B cell (primary cell): ENCODE measurements at regions of chr12 and their contacts with region 1.

Region 1: GRCh38 chr12:47812797-47813510 is 6.7 kb downstream of the HDAC7 start:
- DNase-seq: peak; percentile 94
- ATAC-seq: peak; percentile 72
- H3K4me3 ChIP-seq: peak overlapping the region; percentile 53 to 68 (median 61)
- H3K4me3 Mint-ChIP-seq: peak overlapping the region; percentile 85
- H3K27ac ChIP-seq: peak overlapping the region; percentile 96 to 98
- H3K27ac Mint-ChIP-seq: peak overlapping the region; percentile 96
- H3K4me1 ChIP-seq: peaks cover 91 to 97% of the 10 kb centered on the region in 2 donors
- H3K4me1 Mint-ChIP-seq: peaks cover 94% of the 10 kb centered on the region
- H3K27me3 ChIP-seq: no peaks in the 10 kb centered on the region
- H3K27me3 Mint-ChIP-seq: no peaks in the 10 kb centered on the region
- CTCF ChIP-seq: no peak

Region 2: DNA sequence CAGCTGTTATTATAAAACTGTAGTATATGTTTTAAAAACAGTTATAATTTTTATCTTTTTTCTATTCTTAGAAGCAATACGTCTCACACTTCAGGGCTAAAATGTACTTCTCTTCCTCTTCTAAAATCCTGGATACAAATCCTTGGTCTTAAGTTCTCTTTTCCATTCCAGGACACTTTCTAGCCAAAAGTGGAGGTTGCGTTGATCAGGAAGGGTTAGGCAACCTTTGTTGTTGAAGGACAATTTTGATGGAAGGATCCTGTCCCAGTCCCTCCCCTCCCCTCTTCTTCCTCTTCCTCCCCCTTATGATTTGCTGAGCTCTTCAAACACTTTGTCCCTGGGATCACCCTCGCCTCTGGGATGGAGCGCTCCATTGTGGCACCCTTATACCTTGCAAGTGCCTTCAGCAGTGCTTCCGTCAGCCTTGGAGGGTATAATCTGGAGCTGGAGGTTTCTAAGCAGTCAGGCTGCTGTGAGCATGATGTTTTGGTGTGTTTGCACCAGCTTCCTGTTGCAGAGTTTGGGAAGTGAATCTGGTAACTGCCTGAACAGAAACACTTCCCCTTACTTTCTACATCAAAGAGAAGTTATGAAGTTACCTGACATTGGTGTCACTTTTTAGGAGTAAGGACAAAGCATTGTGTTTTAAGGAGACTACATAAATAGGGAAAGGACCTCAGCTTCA is 1353.0 kb before region 1 on chr12:
- CTCF ChIA-PET with region 1: no interaction called
- POLR2A ChIA-PET with region 1: interaction called, 10 read pairs
- intact Hi-C with region 1: no loop called
- DNase-seq: peak; percentile 67
- ATAC-seq: peak; percentile 69
- H3K4me3 ChIP-seq: peak overlapping the region; percentile 12 to 47 (median 38)
- H3K4me3 Mint-ChIP-seq: peak overlapping the region; percentile 93
- H3K27ac ChIP-seq: peak overlapping the region; percentile 67 to 78
- H3K27ac Mint-ChIP-seq: peak overlapping the region; percentile 99
- H3K4me1 ChIP-seq: peaks cover 53 to 61% of the 10 kb centered on the region in 2 donors
- H3K4me1 Mint-ChIP-seq: peaks cover 59% of the 10 kb centered on the region
- H3K27me3 ChIP-seq: no peaks in the 10 kb centered on the region
- H3K27me3 Mint-ChIP-seq: no peaks in the 10 kb centered on the region
- CTCF ChIP-seq: no peak

Region 3: GRCh38 chr12:47767216-47767724 is 45.7 kb before region 1 on chr12:
- CTCF ChIA-PET with region 1: interaction called, 13 read pairs
- POLR2A ChIA-PET with region 1: no interaction called
- intact Hi-C with region 1: no loop called
- DNase-seq: peak; percentile 78
- ATAC-seq: peak; percentile 74
- H3K4me3 ChIP-seq: no peak overlapping the region
- H3K4me3 Mint-ChIP-seq: no peak overlapping the region
- H3K27ac ChIP-seq: no peak overlapping the region
- H3K27ac Mint-ChIP-seq: no peak overlapping the region
- H3K4me1 ChIP-seq: peaks cover 5 to 15% of the 10 kb centered on the region in 2 donors
- H3K4me1 Mint-ChIP-seq: peaks cover 9% of the 10 kb centered on the region
- H3K27me3 ChIP-seq: no peaks in the 10 kb centered on the region
- H3K27me3 Mint-ChIP-seq: peaks cover 4% of the 10 kb centered on the region
- CTCF ChIP-seq: peak; percentile 80

Region 4: DNA sequence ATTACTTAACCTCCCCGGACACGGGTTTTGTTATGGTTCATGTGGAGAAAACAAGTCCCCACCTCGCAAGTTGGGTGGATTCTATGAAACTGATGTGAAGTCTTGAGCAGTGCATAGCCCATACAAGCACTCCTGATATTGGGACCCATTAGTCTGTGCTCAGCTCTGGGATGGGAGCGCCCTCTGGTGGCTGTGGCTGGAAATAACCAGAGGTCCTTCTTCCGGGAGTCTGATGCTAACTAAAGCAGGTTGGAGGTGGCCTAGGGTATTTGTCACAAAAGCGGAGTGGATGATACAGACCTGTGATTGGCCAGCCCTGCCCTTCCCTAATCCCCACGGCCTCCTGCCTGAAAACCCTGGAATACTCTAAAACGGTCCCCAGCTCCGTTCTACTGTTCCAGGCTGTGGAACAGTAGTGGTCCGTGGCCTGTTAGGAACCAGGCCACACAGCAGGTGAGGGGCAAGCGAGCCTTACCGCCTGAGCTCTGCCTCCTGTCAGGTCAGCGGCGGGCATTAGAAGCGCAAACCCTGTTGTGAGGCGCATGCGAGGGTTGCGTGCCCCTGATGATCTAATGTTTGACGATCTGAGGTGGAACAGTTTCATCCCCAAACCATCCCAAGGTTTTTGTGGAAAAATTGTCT is 33.5 kb before region 1 on chr12:
- CTCF ChIA-PET with region 1: interaction called, 30 read pairs
- POLR2A ChIA-PET with region 1: interaction called, 4 read pairs
- intact Hi-C with region 1: no loop called
- DNase-seq: peak; percentile 90
- ATAC-seq: peak; percentile 90
- H3K4me3 ChIP-seq: no peak overlapping the region
- H3K4me3 Mint-ChIP-seq: no peak overlapping the region
- H3K27ac ChIP-seq: no peak overlapping the region
- H3K27ac Mint-ChIP-seq: peak overlapping the region; percentile 80
- H3K4me1 ChIP-seq: peaks cover 0 to 14% of the 10 kb centered on the region in 2 donors
- H3K4me1 Mint-ChIP-seq: peaks cover 23% of the 10 kb centered on the region
- H3K27me3 ChIP-seq: no peaks in the 10 kb centered on the region
- H3K27me3 Mint-ChIP-seq: no peaks in the 10 kb centered on the region
- CTCF ChIP-seq: peak; percentile 92

Region 5: DNA sequence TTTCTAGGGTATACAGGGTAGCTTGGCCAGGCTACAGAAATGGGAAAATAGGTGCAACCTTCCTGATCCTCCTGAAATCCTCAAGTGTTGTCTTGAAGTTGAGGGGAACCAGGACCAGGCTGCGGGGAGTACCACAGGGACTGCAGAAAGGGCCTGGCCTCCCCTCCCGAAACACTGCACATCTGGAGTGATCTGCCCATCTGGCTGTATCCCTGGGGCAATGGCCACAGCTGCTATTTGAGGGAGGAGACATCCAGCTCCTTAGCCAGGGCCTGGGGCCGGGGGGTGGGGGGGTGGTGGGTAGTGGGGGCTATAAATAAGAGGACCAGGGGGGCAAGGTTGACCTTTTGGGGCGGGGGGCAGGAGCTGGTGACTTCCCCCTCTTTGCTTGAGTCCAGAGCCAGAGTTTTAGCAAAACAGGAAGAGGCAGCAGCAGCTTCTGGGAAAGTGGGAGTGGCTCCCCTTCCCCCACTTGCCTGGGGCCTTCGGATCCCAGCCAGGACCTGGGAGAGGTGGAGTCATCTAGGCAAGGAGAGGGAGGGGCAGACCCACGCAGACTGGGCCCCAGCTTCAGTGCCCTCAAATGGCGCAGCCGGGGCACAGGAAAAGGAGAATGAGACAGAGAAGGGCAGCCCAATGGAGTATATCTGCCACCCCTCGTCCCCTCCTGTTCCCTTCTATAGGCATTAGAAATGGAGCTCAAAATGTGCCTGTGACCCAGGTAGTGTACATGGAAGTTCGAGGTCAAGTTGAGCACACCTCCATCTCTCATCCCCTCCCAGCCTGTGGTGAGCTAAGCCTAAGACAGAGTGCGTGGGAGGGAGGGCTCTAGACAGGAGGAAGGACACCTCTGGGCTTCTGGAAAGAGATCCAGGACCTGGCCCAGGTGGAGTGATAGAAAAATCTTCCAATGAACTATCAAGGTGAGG is 15.9 kb after region 1 on chr12:
- CTCF ChIA-PET with region 1: interaction called, 1,203 read pairs
- POLR2A ChIA-PET with region 1: interaction called, 264 read pairs
- intact Hi-C with region 1: loop called (anchors 1 kb)
- DNase-seq: no peak
- ATAC-seq: no peak
- H3K4me3 ChIP-seq: no peak overlapping the region
- H3K4me3 Mint-ChIP-seq: no peak overlapping the region
- H3K27ac ChIP-seq: no peak overlapping the region
- H3K27ac Mint-ChIP-seq: no peak overlapping the region
- H3K4me1 ChIP-seq: peaks cover 28 to 35% of the 10 kb centered on the region in 2 donors
- H3K4me1 Mint-ChIP-seq: peaks cover 52% of the 10 kb centered on the region
- H3K27me3 ChIP-seq: no peaks in the 10 kb centered on the region
- H3K27me3 Mint-ChIP-seq: no peaks in the 10 kb centered on the region
- CTCF ChIP-seq: no peak